ENCODE measurements at regions of chr6 and their contacts with region 1.

Region 1: DNA sequence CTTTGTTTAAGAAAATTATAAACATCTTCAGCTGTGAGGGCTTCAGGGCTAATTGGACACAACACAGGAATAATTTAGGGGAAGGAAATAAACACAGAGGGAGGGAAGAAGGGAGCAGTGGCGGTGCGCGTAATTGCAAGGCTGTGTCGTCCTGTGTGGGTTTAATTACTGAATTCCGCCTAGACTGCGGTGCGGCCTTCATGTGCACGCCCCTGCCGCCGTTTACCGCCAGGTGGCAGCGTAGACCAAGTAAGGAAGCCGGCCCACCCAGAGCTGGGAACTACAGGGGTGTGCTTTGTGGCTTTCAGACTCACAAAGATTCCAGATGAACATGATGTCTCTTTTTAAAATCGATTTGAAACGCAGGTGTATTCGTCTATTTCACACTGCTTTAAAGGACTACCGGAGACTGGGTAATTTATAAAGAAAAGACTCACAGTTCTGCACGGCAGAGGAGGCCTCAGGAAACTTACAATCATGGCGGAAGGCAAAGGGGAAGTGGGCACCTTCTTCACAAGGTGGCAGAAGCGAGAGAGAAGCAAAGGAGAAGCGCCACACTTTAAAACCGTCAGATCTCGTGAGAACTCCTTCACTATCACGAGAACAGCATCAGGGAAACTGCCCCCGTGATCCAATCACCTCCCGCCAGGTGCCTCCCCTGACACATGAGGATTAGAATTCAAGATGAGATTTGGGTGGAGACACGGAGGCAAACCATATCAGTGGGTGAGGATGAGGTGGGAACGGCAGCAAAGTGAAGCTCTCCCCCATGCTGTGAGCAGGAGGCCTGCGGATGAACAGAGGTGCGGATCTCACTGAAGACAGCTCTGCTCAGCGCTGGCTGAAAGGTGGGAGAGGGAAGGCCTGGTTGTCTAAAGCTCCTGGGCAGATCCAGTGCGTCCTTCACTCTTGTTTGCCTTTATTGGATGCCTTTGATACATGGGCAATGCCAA is 222.0 kb upstream of the PDE10A start:
- DNase-seq: peak; percentile 14 to 61 (median 38)
- ATAC-seq: peak; percentile 70
- H3K4me3 ChIP-seq: no peak overlapping the region
- H3K4me3 Mint-ChIP-seq: peak overlapping the region in 8 of 10 donors; percentile 9 to 64 (median 47)
- H3K27ac ChIP-seq: no peak overlapping the region
- H3K27ac Mint-ChIP-seq: peak overlapping the region in 3 of 9 donors; percentile 9 to 61 (median 31)
- H3K4me1 ChIP-seq: no peaks in the 10 kb centered on the region
- H3K4me1 Mint-ChIP-seq: peaks cover 0 to 12% (median 8%) of the 10 kb centered on the region in 7 donors
- H3K27me3 ChIP-seq: no peaks in the 10 kb centered on the region
- H3K27me3 Mint-ChIP-seq: peaks cover 4 to 29% (median 16%) of the 10 kb centered on the region in 5 donors

Region 2: GRCh38 chr6:166106076-166106686 is 221.1 kb after region 1 on chr6:
- CTCF ChIA-PET with region 1: no interaction called
- POLR2A ChIA-PET with region 1: no interaction called
- intact Hi-C with region 1: loop called in 1 of 2 experiments (anchors 1 kb)
- DNase-seq: peak in 6 of 9 donors; percentile 4 to 51 (median 34)
- ATAC-seq: peak; percentile 37
- H3K4me3 ChIP-seq: no peak overlapping the region
- H3K4me3 Mint-ChIP-seq: no peak overlapping the region
- H3K27ac ChIP-seq: no peak overlapping the region
- H3K27ac Mint-ChIP-seq: no peak overlapping the region
- H3K4me1 ChIP-seq: peaks cover 0 to 3% of the 10 kb centered on the region in 2 donors
- H3K4me1 Mint-ChIP-seq: peaks cover 0 to 6% (median 0%) of the 10 kb centered on the region in 7 donors
- H3K27me3 ChIP-seq: no peaks in the 10 kb centered on the region
- H3K27me3 Mint-ChIP-seq: peaks cover 11 to 37% (median 27%) of the 10 kb centered on the region in 5 donors

Region 3: DNA sequence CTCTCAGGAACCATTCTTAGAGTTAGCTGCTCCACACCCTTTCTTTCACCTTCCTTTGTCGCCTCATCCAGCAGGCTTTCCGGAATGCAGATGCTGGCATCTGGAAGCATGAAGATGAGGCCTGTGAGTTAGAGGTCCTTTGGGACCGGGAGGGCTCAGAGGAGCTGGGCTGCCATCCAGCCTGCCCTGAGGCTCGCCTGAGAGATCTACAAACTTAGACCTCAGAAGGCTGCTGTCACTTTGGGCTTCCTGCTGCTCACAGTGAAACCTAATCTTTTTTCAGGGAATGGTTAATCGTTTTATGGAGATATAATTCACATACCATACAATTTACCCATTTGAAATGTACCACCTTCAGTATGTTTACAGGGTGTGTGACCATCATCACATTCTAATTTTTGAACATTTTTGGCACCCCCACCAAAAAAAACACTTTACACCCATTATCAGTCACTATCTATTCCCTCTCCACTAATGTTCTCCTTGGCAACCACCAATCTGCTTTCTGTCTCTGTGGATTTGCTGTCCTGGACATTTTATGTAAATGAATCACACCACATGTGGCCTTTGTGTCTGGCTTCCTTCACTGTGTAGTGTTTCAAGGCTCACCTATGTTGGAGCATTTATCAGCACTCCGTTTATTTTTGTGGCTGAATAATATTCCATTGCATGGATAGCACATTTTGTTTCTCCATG is 517.6 kb after region 1 on chr6:
- CTCF ChIA-PET with region 1: interaction called, 4 read pairs
- POLR2A ChIA-PET with region 1: no interaction called
- intact Hi-C with region 1: loop called in 1 of 2 experiments (anchors 10 kb)
- DNase-seq: no peak
- ATAC-seq: no peak
- H3K4me3 ChIP-seq: no peak overlapping the region
- H3K4me3 Mint-ChIP-seq: no peak overlapping the region
- H3K27ac ChIP-seq: no peak overlapping the region
- H3K27ac Mint-ChIP-seq: peak overlapping the region in 5 of 9 donors; percentile 19 to 77 (median 54)
- H3K4me1 ChIP-seq: peaks cover 4 to 6% of the 10 kb centered on the region in 2 donors
- H3K4me1 Mint-ChIP-seq: peaks cover 0 to 7% (median 4%) of the 10 kb centered on the region in 7 donors
- H3K27me3 ChIP-seq: no peaks in the 10 kb centered on the region
- H3K27me3 Mint-ChIP-seq: peaks cover 0 to 6% (median 4%) of the 10 kb centered on the region in 5 donors